ENCODE measurements at regions of chr4 and their contacts with region 1.

Region 1: DNA sequence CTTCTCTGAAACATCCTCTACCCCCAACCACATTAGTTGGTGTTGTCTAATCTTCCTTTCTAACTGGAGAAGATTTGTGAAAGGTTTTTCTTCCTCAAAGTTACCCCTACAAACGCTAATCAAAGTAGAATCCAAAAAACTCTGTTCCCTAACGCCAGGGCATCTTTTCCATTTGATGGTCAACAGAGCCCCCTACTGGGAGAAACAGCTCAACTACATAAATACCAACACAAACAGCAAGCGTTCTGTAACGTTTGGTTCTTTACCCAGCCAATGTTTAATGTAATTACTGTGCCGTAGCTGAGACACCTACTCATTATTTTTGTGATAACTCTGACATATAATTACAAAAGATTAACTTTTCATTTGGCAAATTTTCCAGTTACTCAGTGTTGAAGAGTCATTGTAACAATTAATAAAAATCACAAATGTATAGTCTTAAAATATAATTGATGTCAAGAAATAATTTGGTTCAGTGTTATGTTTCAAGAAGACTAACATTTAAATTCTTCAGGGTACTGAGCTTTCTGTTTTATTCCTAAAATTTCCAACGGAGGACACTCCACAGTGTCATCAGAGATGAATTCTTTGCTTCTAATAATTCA is 94.9 kb upstream of the TBC1D9 start:
- DNase-seq: no peak
- ATAC-seq: peak; percentile 71

Region 2: DNA sequence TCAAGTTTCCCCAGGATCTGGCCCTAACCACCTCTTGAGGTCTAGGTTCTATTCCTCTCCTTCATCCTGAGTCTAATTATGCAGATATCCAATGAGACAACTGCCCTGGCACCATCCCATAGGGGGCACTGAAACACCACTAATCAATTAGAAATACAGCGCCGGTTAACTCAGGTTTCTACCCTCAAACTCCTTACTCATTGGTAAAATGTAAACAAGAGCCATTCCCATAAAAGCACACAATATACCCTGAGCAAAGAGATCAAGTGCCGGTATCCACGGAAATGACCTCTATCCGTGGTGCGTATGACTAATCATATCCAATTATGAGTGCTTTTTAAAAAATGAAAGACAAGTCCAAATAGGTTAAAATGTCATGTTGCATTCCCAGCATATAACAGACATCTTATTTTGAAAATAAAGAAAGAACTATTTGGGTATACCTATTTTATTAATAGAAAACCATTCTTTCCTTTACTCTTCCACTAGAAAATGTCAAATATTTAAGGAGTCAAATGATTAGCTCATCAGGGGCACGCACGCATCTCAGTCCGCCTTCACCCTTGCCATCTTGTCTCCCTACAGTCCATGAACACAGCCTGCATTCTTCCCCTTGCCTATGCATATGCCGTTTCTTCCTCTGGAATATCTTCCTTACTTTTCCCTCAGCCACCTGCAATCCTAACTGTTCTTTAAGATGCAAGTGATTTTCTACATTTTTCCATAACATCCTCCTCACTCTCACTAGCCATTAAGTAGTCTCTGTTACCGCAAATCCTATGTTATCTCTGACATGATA is 838.2 kb before region 1 on chr4:
- intact Hi-C with region 1: no loop called
- DNase-seq: peak; percentile 53
- ATAC-seq: peak; percentile 97

Region 3: GRCh38 chr4:140373328-140374129 is 477.6 kb before region 1 on chr4 and contains the start of gene SCOC:
- intact Hi-C with region 1: loop called (anchors 10 kb)
- DNase-seq: peak; percentile 99
- ATAC-seq: peak; percentile 98
- total RNA-seq, gene SCOC: 67.9 TPM

Region 4: DNA sequence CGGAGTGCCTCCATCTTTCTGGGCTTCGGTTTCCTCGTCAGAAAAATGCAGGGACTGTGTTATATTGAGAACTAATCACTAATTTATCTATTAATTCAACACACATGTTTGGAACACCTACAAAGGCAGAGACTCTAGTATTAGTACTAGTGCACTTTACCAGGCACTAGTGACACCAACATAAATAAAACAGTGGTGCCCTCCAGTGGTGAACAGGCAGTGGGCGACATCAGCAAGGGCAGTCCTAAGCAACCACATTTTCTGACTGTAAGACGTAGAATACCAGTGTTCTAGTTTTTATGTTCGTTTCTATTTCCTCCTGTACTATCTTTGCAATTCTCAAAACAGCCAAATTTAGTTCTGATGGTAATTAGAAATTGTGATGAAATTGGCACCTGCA is 213.3 kb before region 1 on chr4:
- intact Hi-C with region 1: loop called (anchors 10 kb)
- DNase-seq: no peak
- ATAC-seq: peak; percentile 38

Region 5: DNA sequence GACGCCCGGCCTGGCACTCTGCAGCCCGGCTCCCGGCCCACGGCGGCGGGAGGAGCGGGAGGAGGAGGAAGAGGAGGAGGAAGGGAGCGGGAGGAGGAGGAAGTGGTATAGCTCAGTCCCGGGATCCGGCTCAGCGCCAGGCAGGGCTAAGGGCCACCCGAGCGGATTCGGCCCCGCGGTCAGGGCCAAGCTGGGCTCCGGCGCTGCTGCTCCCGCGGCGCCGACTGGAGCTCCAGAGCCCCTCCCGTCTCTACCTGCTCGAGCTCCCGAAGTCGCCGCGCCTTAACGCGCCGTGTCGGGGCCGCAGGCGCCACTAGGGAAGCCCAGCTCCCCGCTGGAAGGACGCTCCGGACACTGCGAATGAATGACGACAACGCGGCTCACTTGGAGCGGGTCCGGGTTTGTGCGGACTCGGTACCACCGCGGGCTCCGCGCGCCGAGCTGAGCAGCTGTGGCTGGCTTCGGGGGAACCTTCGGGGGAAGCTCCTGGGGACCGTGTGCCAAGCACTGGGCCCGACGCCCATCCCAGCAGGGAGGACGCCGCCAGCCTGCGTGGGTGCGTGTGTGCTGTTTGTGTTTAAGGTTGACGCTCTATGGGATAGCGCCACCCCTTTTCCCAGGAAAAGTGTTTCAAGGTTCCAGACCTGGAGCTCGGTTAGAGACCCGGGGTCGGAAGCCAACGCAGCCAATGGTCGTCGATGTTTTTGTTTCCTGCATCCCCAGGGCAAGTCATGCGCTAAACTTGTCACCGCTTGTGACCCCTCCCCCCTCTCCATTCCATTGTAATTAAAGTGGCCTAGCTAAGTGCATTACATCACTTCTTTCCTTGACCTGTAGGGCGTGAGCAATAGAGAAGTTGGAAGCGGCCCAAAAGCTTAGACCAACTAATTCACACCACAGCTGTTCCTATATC is 94.6 kb before region 1 on chr4 and contains the start of gene TBC1D9:
- intact Hi-C with region 1: loop called (anchors 5 kb)
- DNase-seq: peak; percentile 89
- ATAC-seq: peak; percentile 87
- total RNA-seq, gene TBC1D9: 10.0 TPM

Measured in Right ventricle myocardium superior (tissue), 1 donor.